ENCODE measurements at regions of chr13 and their contacts with region 1.

Region 1: DNA sequence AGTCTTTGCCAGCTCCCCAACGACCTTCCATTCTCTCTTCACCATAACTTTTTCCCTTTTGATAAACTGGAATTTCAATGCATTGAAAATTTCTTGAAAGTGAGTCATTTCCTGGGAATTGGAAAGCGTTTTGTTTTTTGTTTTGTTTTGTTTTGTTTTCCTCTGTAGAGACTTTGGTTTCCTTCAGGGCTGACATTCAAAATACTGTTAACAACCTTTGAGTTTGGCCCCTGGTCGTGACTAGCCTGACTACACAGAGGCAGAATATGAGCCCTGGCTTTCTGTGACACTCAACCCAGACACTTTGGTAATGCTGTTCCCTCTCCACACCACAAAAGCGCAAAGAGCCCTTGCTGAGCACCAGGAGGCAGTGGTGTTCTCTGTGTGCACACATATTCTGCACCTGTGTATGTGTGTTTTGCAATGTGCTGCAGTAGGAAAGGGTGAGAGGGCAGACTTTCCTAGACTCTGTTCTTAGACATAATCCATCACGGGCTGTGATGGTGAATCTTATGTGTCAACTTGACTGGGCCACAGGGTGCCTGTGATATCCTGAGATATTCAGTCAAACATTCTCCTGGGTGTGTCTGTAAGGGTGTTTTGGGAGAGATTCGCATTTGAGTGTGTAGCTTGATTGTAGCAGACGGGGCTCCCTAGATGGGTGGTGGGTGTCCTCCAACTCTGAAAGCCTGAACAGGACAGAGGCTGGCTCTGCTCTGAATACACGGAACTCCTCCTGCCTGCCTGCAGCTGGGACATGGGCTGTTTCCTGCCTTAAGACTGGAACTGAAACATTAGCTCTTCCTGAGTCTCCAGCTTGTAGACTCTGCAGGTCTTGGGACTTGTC is 29.5 kb upstream of the ANKRD10 start:
- DNase-seq: peak; percentile 44 to 65
- ATAC-seq: peak; percentile 91 to 96
- H3K4me3 ChIP-seq: no peak overlapping the region
- H3K27ac ChIP-seq: no peak overlapping the region
- H3K4me1 ChIP-seq: no peaks in the 10 kb centered on the region
- CTCF ChIP-seq: peak; percentile 44
- EP300 ChIP-seq: no peak
- POLR2A ChIP-seq: no peak
- RAD21 ChIP-seq: peak; percentile 72 to 91

Region 2: DNA sequence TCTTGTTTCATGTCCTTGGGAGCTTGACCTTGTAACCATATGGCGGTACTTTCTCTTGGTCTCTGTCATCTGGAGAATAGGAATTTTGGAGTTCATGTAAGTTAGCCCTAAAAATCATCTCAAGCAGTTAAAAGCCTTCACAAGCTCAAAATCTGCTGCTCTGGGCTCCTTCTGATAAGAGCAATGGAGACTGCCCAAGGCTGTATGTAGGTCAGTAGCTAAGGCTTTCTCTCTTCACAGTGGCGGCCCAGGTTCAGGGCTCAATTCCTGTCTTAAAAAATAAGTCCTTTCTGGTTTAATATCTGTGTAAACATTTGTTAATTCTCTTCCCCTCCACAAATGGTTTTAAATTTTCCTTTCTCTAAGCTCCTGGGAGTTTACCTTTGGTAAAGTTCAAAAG is 15.9 kb after region 1 on chr13:
- CTCF ChIA-PET with region 1: no interaction called
- POLR2A ChIA-PET with region 1: no interaction called
- DNase-seq: no peak
- ATAC-seq: no peak
- H3K4me3 ChIP-seq: no peak overlapping the region
- H3K27ac ChIP-seq: no peak overlapping the region
- H3K4me1 ChIP-seq: peaks cover 21% of the 10 kb centered on the region
- CTCF ChIP-seq: no peak
- EP300 ChIP-seq: no peak
- POLR2A ChIP-seq: no peak
- RAD21 ChIP-seq: no peak

Region 3: DNA sequence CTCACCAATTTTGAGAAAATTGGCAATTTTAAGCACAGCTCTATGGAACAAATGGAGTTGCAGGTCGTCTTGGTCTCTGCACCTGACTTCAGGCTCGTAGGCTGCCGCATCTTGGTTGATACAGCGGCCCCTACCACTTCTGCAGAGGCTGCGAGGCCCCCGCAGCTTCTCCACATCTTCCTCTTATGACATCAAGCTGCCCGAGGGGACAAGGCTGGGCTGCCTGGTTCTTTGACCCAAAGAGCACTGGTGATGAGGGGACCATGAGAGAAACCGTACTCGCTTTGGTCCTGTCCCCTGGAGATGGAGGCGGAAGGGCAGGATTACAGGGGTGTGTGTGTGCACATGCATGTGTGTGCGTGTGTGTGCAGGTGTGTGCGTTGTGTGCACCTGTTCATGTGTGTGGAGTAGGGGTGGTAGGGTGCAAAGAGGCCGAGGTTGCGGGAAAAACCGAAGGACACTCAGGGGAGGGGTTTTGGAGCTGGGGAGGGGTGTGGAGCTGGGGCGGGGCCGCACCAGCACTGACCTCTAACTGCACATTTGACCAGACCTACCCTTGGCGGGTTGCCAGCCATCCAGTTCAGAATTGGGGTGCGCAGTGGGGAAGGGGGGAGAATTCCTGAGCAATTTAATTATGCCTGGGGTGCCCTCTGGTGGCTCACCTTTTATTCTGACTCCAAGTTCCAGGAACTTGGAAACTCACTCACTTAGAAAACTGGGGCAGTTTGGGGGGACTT is 105.6 kb after region 1 on chr13:
- CTCF ChIA-PET with region 1: interaction called, 13 read pairs
- POLR2A ChIA-PET with region 1: no interaction called
- DNase-seq: no peak
- ATAC-seq: peak in 1 of 2 experiments; percentile 70; a peak in 3 of 6 replicates
- H3K4me3 ChIP-seq: no peak overlapping the region
- H3K27ac ChIP-seq: no peak overlapping the region
- H3K4me1 ChIP-seq: no peaks in the 10 kb centered on the region
- CTCF ChIP-seq: peak; percentile 62
- EP300 ChIP-seq: no peak
- POLR2A ChIP-seq: no peak
- RAD21 ChIP-seq: peak; percentile 71 to 75

Measured in A549 (cell line).